CD4-positive, alpha-beta memory T cell (primary cell): ENCODE measurements at regions of chr4 and their contacts with region 1.

Region 1: GRCh38 chr4:81069706-81070331 is 39.3 kb downstream of the BMP3 start:
- DNase-seq: peak; percentile 42 to 57 (median 53)
- H3K4me3 ChIP-seq: no peak overlapping the region
- H3K4me3 Mint-ChIP-seq: no peak overlapping the region
- H3K27ac ChIP-seq: no peak overlapping the region
- H3K27ac Mint-ChIP-seq: no peak overlapping the region
- H3K4me1 ChIP-seq: no peaks in the 10 kb centered on the region
- H3K4me1 Mint-ChIP-seq: no peaks in the 10 kb centered on the region
- H3K27me3 ChIP-seq: no peaks in the 10 kb centered on the region
- H3K27me3 Mint-ChIP-seq: peaks cover 12 to 13% of the 10 kb centered on the region in 2 donors

Region 2: GRCh38 chr4:80931631-80932081 is 138.2 kb before region 1 on chr4:
- CTCF ChIA-PET with region 1: no interaction called
- POLR2A ChIA-PET with region 1: no interaction called
- intact Hi-C with region 1: no loop called
- DNase-seq: no peak
- H3K4me3 ChIP-seq: no peak overlapping the region
- H3K4me3 Mint-ChIP-seq: no peak overlapping the region
- H3K27ac ChIP-seq: no peak overlapping the region
- H3K27ac Mint-ChIP-seq: no peak overlapping the region
- H3K4me1 ChIP-seq: no peaks in the 10 kb centered on the region
- H3K4me1 Mint-ChIP-seq: no peaks in the 10 kb centered on the region
- H3K27me3 ChIP-seq: no peaks in the 10 kb centered on the region
- H3K27me3 Mint-ChIP-seq: peaks cover 0 to 1% of the 10 kb centered on the region in 2 donors

Region 3: DNA sequence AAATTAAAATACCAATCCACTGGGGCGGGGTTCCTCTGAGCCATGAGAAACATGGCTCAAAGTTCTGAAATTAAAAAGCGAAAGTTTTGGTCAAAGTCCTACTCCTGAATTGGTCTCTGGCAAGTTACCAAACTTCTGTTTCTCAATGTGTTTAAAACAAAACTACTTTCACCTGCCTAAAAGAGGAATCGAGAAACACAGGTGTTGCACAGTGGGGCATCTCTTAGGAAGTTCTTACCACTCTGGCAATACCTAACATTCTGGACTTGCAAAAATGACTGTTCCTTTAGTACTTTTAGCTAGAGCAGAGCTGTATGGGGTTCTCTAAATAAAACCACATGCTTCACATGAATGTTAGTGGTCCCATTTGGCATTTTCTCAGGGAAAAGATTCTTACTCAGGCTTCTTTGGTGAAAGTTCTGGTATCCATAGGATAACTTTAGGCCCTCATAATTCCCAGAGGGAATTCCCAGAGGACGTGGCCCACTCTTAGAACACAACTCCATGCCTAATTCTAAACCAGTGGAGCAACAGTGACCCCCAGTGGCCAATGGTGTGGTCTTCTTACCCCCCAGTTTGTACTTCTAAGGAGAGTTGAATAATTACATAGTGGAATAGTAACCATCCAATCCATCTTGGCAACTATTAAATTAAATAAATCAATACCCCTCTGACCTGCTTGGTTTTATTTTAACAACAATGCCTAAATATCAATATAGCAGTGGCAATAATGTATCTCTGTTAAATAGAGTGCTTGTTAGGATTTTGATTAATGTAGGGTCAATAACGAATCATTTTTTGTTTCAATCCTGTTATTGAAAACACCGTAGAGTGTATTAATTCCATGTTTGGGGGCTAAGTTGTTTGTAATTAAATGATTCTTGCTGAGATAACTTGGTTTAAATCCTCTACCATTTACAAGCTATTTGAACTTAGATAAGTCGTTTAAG is 17.4 kb before region 1 on chr4:
- CTCF ChIA-PET with region 1: interaction called, 18 read pairs
- POLR2A ChIA-PET with region 1: no interaction called
- intact Hi-C with region 1: no loop called
- DNase-seq: peak in 4 of 5 donors; percentile 20 to 39 (median 23)
- H3K4me3 ChIP-seq: no peak overlapping the region
- H3K4me3 Mint-ChIP-seq: no peak overlapping the region
- H3K27ac ChIP-seq: no peak overlapping the region
- H3K27ac Mint-ChIP-seq: no peak overlapping the region
- H3K4me1 ChIP-seq: no peaks in the 10 kb centered on the region
- H3K4me1 Mint-ChIP-seq: no peaks in the 10 kb centered on the region
- H3K27me3 ChIP-seq: no peaks in the 10 kb centered on the region
- H3K27me3 Mint-ChIP-seq: peaks cover 4 to 5% of the 10 kb centered on the region in 2 donors

Region 4: DNA sequence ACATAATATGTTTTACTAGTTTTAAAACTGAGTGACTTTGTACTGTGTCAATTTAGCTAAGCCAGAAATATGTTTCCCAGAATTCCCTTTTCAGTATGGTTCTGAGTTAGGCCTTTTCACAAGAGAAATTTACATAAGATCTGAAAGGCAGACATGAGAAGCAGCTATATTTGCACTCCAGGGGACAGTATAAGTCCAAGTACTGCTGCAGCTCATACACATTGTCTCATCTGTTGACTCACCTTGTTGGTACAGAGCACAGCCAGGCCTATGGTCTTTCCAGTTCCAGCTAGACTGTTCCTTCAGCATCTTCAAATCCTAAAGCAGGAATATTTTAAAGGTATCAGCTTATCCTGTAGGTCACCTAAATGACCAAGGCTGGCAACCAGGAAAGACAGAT is 14.2 kb after region 1 on chr4:
- CTCF ChIA-PET with region 1: interaction called, 25 read pairs
- POLR2A ChIA-PET with region 1: no interaction called
- intact Hi-C with region 1: no loop called
- DNase-seq: no peak
- H3K4me3 ChIP-seq: no peak overlapping the region
- H3K4me3 Mint-ChIP-seq: no peak overlapping the region
- H3K27ac ChIP-seq: no peak overlapping the region
- H3K27ac Mint-ChIP-seq: no peak overlapping the region
- H3K4me1 ChIP-seq: no peaks in the 10 kb centered on the region
- H3K4me1 Mint-ChIP-seq: no peaks in the 10 kb centered on the region
- H3K27me3 ChIP-seq: no peaks in the 10 kb centered on the region
- H3K27me3 Mint-ChIP-seq: peaks cover 2 to 4% of the 10 kb centered on the region in 2 donors

Region 5: GRCh38 chr4:81255524-81255923 is 185.7 kb after region 1 on chr4:
- CTCF ChIA-PET with region 1: no interaction called
- POLR2A ChIA-PET with region 1: no interaction called
- intact Hi-C with region 1: loop called (anchors 5 kb)
- DNase-seq: no peak
- H3K4me3 ChIP-seq: no peak overlapping the region
- H3K4me3 Mint-ChIP-seq: no peak overlapping the region
- H3K27ac ChIP-seq: no peak overlapping the region
- H3K27ac Mint-ChIP-seq: no peak overlapping the region
- H3K4me1 ChIP-seq: no peaks in the 10 kb centered on the region
- H3K4me1 Mint-ChIP-seq: no peaks in the 10 kb centered on the region
- H3K27me3 ChIP-seq: no peaks in the 10 kb centered on the region
- H3K27me3 Mint-ChIP-seq: peaks cover 6 to 7% of the 10 kb centered on the region in 2 donors

Region 6: GRCh38 chr4:81351654-81352445 is 282.0 kb after region 1 on chr4:
- CTCF ChIA-PET with region 1: interaction called, 55 read pairs
- POLR2A ChIA-PET with region 1: no interaction called
- intact Hi-C with region 1: no loop called
- DNase-seq: peak in 4 of 5 donors; percentile 38 to 55 (median 42)
- H3K4me3 ChIP-seq: no peak overlapping the region
- H3K4me3 Mint-ChIP-seq: no peak overlapping the region
- H3K27ac ChIP-seq: no peak overlapping the region
- H3K27ac Mint-ChIP-seq: no peak overlapping the region
- H3K4me1 ChIP-seq: no peaks in the 10 kb centered on the region
- H3K4me1 Mint-ChIP-seq: peaks cover 0 to 2% (median 0%) of the 10 kb centered on the region in 4 donors
- H3K27me3 ChIP-seq: no peaks in the 10 kb centered on the region
- H3K27me3 Mint-ChIP-seq: peaks cover 6 to 8% of the 10 kb centered on the region in 2 donors